IMR-90 (cell line): ENCODE measurements at regions of chr3 and their contacts with region 1.

Region 1: GRCh38 chr3:106985721-106986120 is 391.5 kb upstream of the CCDC54 start:
- DNase-seq: no peak
- ATAC-seq: no peak
- H3K4me3 ChIP-seq: no peak overlapping the region
- H3K27ac ChIP-seq: no peak overlapping the region
- H3K4me1 ChIP-seq: no peaks in the 10 kb centered on the region
- H3K27me3 ChIP-seq: no peaks in the 10 kb centered on the region; the same call in 1 of the 2 replicates
- CTCF ChIP-seq: no peak
- POLR2A ChIP-seq: no peak
- RAD21 ChIP-seq: no peak

Region 2: DNA sequence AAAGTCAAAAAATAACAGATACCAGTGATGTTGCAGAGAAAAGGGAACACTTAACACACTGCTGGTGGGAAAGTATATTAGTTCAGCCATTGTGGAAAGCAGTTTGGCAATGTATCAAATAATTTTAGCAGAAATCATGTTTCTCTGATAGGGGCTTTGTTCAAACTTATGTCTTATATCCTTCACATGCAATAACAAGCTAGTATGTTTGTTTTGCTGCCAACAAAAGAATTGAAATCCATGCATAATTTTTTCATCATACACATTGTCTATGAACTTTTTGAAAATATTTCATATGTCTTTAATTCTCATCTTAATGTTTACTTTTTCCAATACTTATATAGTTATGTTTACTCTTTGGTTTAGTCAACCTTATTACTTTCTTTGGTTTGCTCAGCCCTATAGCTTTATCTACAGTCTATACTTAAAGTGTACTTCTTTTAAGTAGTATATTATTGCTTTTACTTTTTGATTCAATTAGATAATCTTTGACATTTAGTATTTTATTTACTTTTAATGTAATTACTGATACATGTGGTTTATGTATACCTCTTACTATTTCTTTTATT is 477.3 kb before region 1 on chr3:
- CTCF ChIA-PET with region 1: no interaction called
- POLR2A ChIA-PET with region 1: no interaction called
- dilution Hi-C with region 1: no loop called
- in situ Hi-C with region 1: no loop called
- intact Hi-C with region 1: no loop called
- DNase-seq: no peak
- ATAC-seq: no peak
- H3K4me3 ChIP-seq: no peak overlapping the region
- H3K27ac ChIP-seq: no peak overlapping the region
- H3K4me1 ChIP-seq: no peaks in the 10 kb centered on the region; the same call in 1 of the 2 replicates
- H3K27me3 ChIP-seq: no peaks in the 10 kb centered on the region
- CTCF ChIP-seq: no peak
- POLR2A ChIP-seq: no peak
- RAD21 ChIP-seq: no peak

Region 3: DNA sequence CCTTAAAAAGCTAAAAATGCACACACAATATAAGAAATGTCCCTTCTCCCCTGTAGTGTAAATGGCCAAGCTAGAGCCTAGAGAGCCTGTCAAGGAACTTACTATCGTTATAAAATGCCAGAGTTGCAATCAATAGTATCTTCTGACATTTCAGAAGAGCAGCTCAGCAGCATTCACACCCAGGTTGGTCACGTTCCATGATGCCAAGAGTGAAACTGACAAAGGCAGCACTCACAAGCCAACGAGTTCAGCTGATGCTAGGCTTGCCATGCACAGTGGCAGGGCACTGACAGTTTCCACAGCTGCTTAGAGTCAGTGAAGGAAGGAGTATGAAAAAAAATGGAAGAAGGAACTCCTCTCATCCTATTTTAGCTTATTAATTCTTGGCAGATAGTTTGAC is 60.1 kb after region 1 on chr3:
- CTCF ChIA-PET with region 1: no interaction called
- POLR2A ChIA-PET with region 1: no interaction called
- dilution Hi-C with region 1: no loop called
- in situ Hi-C with region 1: no loop called
- intact Hi-C with region 1: loop called (anchors 2 kb)
- DNase-seq: no peak
- ATAC-seq: no peak
- H3K4me3 ChIP-seq: no peak overlapping the region
- H3K27ac ChIP-seq: no peak overlapping the region
- H3K4me1 ChIP-seq: no peaks in the 10 kb centered on the region
- H3K27me3 ChIP-seq: no peaks in the 10 kb centered on the region
- CTCF ChIP-seq: no peak
- POLR2A ChIP-seq: no peak
- RAD21 ChIP-seq: no peak

Region 4: DNA sequence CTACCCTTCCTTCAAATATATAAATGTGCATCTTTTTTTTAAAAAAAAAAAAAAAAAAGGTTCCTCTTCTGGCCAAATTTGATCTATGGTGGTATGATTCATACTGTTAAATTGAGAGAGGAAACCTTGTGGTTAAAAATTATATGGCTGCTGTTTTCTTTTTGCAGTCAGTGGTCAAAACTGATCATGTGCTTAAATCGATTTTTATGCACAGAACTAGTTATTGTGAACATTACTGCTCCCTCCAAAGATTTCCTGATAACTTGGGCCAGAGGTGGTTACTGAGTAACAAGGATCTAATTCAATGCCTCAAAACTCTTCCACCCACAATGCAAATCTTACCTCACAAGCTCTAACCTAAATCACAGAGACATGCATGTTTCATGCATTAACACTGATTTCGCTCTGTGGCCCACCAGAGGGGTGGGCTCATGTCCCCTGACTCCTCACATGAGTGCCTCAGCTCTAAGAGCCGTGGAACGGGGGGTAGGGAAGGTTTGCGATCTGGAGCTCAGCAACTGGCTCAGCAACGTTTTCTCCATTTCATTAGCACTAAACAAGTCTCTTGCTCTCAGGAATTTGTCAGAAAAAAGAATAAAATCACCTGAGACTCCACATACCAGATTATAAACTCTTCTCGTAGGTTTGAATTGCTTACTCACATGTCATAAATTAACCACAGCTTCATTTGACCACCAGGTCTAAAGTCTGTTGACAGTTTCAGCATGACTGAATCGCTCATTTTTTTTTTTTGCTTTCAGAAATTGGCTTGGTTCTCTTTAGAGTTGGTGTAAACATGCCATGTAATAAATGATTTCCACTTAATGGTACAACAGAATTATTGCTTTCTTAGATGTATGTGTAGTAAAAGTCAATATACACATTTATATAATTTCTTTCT is 824.7 kb after region 1 on chr3:
- CTCF ChIA-PET with region 1: no interaction called
- POLR2A ChIA-PET with region 1: no interaction called
- dilution Hi-C with region 1: no loop called
- in situ Hi-C with region 1: no loop called
- intact Hi-C with region 1: no loop called
- DNase-seq: peak; percentile 9
- ATAC-seq: peak; percentile 13; the same call in 1 of the 2 replicates
- H3K4me3 ChIP-seq: no peak overlapping the region
- H3K27ac ChIP-seq: no peak overlapping the region
- H3K4me1 ChIP-seq: peaks cover 9% of the 10 kb centered on the region
- H3K27me3 ChIP-seq: no peaks in the 10 kb centered on the region
- CTCF ChIP-seq: no peak
- POLR2A ChIP-seq: no peak
- RAD21 ChIP-seq: no peak